Caco-2 (cell line): ENCODE measurements at regions of chr5 and their contacts with region 1.

Region 1: GRCh38 chr5:42944989-42945388 is 95.1 kb downstream of the ANXA2R start:
- DNase-seq: no peak
- H3K4me3 ChIP-seq: no peak overlapping the region
- H3K4me3 Mint-ChIP-seq: no peak overlapping the region
- H3K27ac Mint-ChIP-seq: no peak overlapping the region
- H3K4me1 ChIP-seq: peaks cover 22% of the 10 kb centered on the region
- H3K4me1 Mint-ChIP-seq: peaks cover 15% of the 10 kb centered on the region
- H3K27me3 ChIP-seq: no peaks in the 10 kb centered on the region
- H3K27me3 Mint-ChIP-seq: no peaks in the 10 kb centered on the region
- CTCF ChIP-seq: no peak

Region 2: GRCh38 chr5:42994246-42995151 is 49.5 kb after region 1 on chr5:
- CTCF ChIA-PET with region 1: no interaction called
- POLR2A ChIA-PET with region 1: no interaction called
- intact Hi-C with region 1: loop called (anchors 5 kb)
- DNase-seq: peak in 1 of 2 experiments; percentile 67
- H3K4me3 ChIP-seq: no peak overlapping the region
- H3K4me3 Mint-ChIP-seq: peak overlapping the region; percentile 42
- H3K27ac Mint-ChIP-seq: no peak overlapping the region
- H3K4me1 ChIP-seq: no peaks in the 10 kb centered on the region
- H3K4me1 Mint-ChIP-seq: no peaks in the 10 kb centered on the region
- H3K27me3 ChIP-seq: no peaks in the 10 kb centered on the region
- H3K27me3 Mint-ChIP-seq: no peaks in the 10 kb centered on the region
- CTCF ChIP-seq: peak; percentile 46 to 50